IMR-90 (cell line): ENCODE measurements at regions of chr22 and their contacts with region 1.

Region 1: DNA sequence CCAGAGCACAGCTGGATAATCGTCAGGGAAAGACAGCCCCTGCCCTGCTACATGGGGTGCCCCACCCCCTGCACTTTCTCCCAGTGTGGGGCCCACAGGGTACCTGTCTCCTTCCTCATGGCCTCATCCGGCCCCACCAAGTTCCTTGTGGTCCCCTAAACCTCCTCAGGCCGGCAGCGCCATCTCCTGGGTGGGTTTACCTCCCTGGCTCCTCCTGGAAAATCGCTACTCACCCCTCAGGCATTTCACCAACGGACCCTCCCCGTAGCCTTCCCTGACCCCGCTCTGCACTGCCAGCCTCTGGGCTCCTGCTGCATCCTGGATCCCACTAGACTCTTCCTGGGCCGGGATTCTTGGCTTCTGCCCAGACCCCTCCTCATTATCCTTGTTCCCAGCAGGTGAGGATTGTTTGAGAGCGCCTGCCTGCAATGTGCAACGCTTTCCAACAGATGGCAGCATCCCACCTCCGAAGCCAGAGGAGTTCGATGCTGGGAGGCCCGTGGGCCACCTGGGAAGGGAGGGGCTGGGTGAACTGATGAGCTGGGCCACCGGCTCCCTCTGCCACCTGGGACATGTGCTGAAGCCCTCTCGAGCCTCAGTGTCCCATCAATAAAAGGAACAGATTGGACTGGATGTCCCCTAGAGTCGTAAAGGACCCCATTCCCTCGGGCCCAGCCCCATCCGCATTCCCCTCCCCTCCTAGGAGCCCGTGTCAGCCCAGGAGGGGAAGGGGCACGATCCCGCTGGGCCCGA is 44.2 kb upstream of the TTLL12 start:
- DNase-seq: peak; percentile 28
- ATAC-seq: peak; percentile 74
- H3K4me3 ChIP-seq: no peak overlapping the region
- H3K27ac ChIP-seq: no peak overlapping the region
- H3K4me1 ChIP-seq: no peaks in the 10 kb centered on the region; the same call in 1 of the 2 replicates
- H3K27me3 ChIP-seq: peaks cover 46% of the 10 kb centered on the region
- CTCF ChIP-seq: peak; percentile 80
- POLR2A ChIP-seq: no peak
- RAD21 ChIP-seq: peak; percentile 81

Region 2: GRCh38 chr22:42791721-42792420 is 439.3 kb before region 1 on chr22:
- CTCF ChIA-PET with region 1: no interaction called
- POLR2A ChIA-PET with region 1: no interaction called
- dilution Hi-C with region 1: no loop called
- in situ Hi-C with region 1: no loop called
- intact Hi-C with region 1: no loop called
- DNase-seq: no peak
- ATAC-seq: no peak; the same call in 1 of the 2 replicates
- H3K4me3 ChIP-seq: no peak overlapping the region
- H3K27ac ChIP-seq: no peak overlapping the region
- H3K4me1 ChIP-seq: peaks cover 11% of the 10 kb centered on the region; the same call in 1 of the 2 replicates
- H3K27me3 ChIP-seq: no peaks in the 10 kb centered on the region
- CTCF ChIP-seq: no peak
- POLR2A ChIP-seq: no peak
- RAD21 ChIP-seq: no peak

Region 3: GRCh38 chr22:43346521-43346929 is 115.4 kb after region 1 on chr22:
- CTCF ChIA-PET with region 1: no interaction called
- POLR2A ChIA-PET with region 1: no interaction called
- dilution Hi-C with region 1: no loop called
- in situ Hi-C with region 1: no loop called
- intact Hi-C with region 1: loop called (anchors 1 kb)
- DNase-seq: no peak
- ATAC-seq: peak; percentile 73
- H3K4me3 ChIP-seq: no peak overlapping the region
- H3K27ac ChIP-seq: no peak overlapping the region
- H3K4me1 ChIP-seq: no peaks in the 10 kb centered on the region
- H3K27me3 ChIP-seq: peaks cover 55% of the 10 kb centered on the region
- CTCF ChIP-seq: peak; percentile 48
- POLR2A ChIP-seq: no peak
- RAD21 ChIP-seq: peak; percentile 48